Calu3 (cell line): ENCODE measurements at regions of chr9 and their contacts with region 1.

Region 1: DNA sequence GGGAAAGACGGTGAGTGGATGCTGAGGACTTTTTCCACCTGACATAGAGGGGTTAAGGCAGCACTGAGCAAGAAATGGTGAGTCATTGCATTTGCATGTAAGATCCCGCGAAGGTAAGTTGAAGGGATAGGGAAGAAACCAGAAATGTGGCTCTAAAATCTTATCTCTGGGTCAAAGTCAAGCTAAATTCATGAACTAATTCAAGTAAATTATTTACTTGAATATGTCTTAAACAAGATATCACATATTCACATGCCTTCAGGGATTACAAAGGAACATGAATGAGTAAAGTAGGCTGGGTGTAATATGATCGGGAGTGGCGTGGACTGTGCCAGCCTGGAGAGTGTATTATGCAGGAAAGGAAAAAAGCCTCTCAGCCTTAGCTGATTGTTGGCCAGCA is 74.4 kb upstream of the EQTN start:
- DNase-seq: peak; percentile 48
- H3K4me3 Mint-ChIP-seq: peak overlapping the region; percentile 4
- H3K27ac Mint-ChIP-seq: peak overlapping the region; percentile 75
- H3K4me1 Mint-ChIP-seq: peaks cover 62% of the 10 kb centered on the region
- H3K27me3 Mint-ChIP-seq: no peaks in the 10 kb centered on the region
- CTCF ChIP-seq: no peak

Region 2: GRCh38 chr9:27427273-27427645 is 55.9 kb after region 1 on chr9:
- CTCF ChIA-PET with region 1: no interaction called
- intact Hi-C with region 1: loop called (anchors 5 kb)
- DNase-seq: peak; percentile 44
- H3K4me3 Mint-ChIP-seq: no peak overlapping the region
- H3K27ac Mint-ChIP-seq: peak overlapping the region; percentile 89
- H3K4me1 Mint-ChIP-seq: peaks cover 59% of the 10 kb centered on the region
- H3K27me3 Mint-ChIP-seq: no peaks in the 10 kb centered on the region
- CTCF ChIP-seq: no peak